Stomach (tissue), 19 donors: ENCODE measurements at regions of chr5 and their contacts with region 1.

Region 1: DNA sequence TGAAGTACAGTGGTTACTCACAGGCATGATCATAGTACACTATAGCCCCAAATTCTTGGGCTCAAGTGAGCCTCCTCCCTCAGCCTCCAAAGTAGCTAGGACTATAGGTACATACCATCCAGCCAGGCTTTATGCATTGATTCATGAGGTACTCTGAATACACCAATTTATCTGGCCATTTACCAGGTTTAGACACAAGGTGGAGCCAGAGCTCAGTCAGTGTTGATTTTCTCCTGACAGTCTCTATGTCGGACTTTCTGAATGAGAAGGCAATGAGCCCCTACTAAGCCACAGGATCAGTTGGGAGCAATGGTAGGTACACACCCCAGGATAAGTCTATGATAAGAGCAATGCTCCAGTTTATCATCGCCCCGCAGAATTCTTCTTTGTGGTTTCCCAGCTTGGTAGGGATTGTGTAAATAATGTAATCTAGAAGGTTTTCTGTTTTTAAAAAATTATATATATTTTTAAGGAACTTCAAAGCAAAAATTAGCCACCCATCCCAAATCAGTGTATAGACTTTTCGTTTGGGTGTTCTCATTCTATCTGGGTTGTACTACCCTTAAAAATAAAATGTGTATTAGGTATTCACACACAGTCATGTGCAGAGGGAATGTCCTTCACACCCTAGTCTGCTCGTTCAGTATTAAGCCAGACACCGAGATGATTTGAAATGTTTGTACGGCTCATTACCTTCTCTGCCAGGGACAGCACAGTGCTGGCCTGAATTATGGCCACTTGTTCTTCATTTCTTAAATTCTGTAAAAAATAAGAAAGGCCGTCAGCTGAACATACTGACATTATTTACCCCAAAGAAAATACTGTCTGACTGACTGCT is 118.4 kb upstream of the DPYSL3 start:
- DNase-seq: peak; percentile 64 to 89
- H3K4me3 ChIP-seq: no peak overlapping the region
- H3K27ac ChIP-seq: no peak overlapping the region
- H3K4me1 ChIP-seq: peaks cover 0 to 6% (median 3%) of the 10 kb centered on the region in 4 donors
- H3K27me3 ChIP-seq: no peaks in the 10 kb centered on the region
- CTCF ChIP-seq: peak in 5 of 7 experiments; percentile 35 to 81 (median 68)
- EP300 ChIP-seq: no peak
- POLR2A ChIP-seq: no peak

Region 2: DNA sequence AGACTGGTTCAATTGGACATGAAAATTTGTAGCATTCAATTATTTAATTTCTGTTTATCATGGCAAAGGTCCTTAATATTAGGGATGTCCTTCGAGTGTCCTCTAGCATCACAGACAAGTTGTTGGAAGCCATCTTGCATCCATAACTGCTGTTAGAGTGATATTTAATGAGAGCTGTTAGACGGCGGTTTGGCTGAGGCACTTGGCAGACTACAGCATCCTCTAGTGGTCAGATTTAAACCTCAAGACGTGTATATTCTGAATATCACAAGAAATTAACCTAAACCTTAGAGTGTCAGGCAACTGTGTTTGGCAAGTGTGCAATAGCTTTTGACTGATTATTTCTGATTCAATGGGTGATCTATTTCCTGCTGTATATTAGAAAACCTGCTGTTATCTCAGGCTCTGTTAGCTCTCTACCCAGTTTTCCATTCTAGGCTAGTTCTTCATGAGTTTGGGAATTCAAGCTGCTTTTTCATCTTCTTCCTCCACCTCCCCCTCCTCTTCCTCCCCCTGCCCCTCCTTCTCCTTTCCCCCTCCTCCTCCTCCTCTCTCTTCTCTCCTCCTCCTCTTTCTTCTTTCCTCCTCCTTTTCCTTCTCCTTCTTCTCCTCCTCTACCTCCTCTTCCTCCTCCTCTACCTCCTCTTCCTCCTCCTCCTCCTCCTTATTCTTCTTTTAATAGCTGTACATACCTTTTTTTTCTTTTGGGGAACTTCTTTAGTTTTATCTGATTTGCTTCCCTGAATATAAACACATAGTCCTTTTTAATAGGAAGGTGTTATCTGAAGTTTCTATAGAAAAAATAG is 194.6 kb after region 1 on chr5:
- intact Hi-C with region 1: loop called (anchors 10 kb)
- DNase-seq: peak; percentile 53 to 88
- H3K4me3 ChIP-seq: no peak overlapping the region
- H3K27ac ChIP-seq: peak overlapping the region in 3 of 5 donors; percentile 31 to 53 (median 37)
- H3K4me1 ChIP-seq: peaks cover 0 to 34% (median 12%) of the 10 kb centered on the region in 4 donors
- H3K27me3 ChIP-seq: no peaks in the 10 kb centered on the region
- CTCF ChIP-seq: peak in 5 of 7 experiments; percentile 61 to 92 (median 78)
- EP300 ChIP-seq: no peak
- POLR2A ChIP-seq: no peak